HEK293 (cell line): ENCODE measurements at regions of chr20 and their contacts with region 1.

Region 1: GRCh38 chr20:49964964-49965780 is 17.6 kb upstream of the SNAI1 start:
- H3K4me3 ChIP-seq: no peak overlapping the region
- H3K27ac ChIP-seq: no peak overlapping the region
- H3K4me1 ChIP-seq: no peaks in the 10 kb centered on the region
- CTCF ChIP-seq: peak; percentile 66

Region 2: DNA sequence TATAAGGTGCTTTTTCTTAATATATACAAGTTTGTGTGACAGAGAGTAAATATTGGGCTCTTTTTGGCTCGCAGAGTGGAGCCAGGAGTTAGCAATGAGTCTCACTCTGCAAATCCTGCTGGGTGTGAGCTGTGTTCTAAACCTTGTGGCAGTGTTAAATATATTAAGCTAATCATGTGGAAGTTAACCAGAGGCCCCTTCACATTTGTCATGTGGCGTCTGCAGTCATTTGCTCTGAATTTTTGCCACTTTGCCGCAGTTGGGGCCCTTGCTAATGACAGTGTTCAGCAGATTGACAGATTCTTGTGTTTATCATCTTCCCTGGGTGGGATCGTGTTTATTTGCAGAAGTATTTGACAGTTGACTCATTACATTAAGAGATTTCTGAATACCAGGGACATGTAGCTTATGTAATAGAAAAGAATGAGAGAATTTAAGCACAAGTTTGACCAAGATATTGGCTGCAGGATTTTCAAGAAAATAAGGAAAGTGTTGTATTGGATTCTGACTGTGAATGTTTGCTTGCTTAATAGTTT is 87.7 kb before region 1 on chr20:
- CTCF ChIA-PET with region 1: no interaction called
- POLR2A ChIA-PET with region 1: no interaction called
- H3K4me3 ChIP-seq: no peak overlapping the region
- H3K27ac ChIP-seq: no peak overlapping the region
- H3K4me1 ChIP-seq: no peaks in the 10 kb centered on the region
- CTCF ChIP-seq: no peak

Region 3: DNA sequence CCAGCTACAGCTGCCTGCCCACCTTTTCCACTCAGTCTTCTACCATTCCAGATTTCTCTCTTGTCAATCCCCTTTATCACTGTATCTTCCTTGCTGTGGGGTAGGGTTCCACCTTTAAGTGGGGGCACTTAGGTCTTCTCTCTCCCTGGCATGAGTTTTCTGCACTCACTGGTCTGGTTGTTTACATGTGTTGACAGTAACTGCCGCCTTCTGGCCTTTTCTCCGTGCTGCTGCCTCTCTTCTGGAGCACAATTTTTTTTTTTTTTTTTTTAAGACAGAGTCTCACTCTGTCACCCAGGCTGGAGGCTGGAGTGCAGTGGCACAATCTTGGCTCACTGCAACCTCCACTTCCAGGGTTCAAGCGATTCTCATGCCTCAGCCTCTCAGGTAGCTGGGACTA is 17.0 kb before region 1 on chr20:
- CTCF ChIA-PET with region 1: interaction called, 11 read pairs
- POLR2A ChIA-PET with region 1: interaction called, 3 read pairs
- H3K4me3 ChIP-seq: no peak overlapping the region
- H3K27ac ChIP-seq: no peak overlapping the region
- H3K4me1 ChIP-seq: no peaks in the 10 kb centered on the region
- CTCF ChIP-seq: no peak

Region 4: DNA sequence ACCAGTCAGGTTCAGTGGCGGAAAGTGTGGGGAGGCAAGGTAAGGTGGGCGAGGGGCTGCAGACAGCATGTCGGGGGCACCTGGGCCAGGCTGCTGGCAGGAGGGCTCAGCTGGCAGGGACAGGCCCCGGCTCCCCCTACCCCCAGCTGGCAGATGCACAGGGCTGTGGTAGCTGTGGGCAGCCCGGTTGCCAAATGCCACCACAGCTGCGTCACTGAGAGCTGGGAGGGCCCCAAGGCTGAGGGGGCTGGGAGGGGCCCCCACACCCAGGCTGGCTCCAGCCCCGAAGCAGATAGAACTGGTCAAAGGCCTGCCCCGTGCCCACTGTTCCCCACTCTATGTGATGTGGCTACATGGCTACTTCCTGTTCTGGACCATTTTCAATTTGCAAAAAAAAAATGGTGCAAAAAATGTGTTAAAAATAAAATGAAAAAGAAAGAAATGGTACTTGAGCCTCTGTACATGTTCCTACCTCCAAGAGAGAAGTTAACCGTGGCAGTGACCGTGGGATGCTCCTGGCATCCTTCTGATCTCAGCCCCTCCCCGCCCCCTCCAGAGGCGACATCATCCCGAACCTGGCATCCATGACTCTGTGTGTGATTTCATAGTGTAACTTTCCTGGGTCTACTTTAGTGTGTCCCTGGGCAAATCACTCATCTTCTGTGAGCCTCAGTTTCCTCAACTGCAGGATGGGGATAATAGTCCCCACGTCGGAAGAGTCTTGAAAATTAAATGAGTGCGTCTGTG is 83.4 kb after region 1 on chr20:
- CTCF ChIA-PET with region 1: no interaction called
- POLR2A ChIA-PET with region 1: no interaction called
- H3K4me3 ChIP-seq: no peak overlapping the region
- H3K27ac ChIP-seq: no peak overlapping the region
- H3K4me1 ChIP-seq: no peaks in the 10 kb centered on the region
- CTCF ChIP-seq: no peak